Activated CD4-positive, alpha-beta T cell treated with anti-CD3 and anti-CD28 coated beads, Interleukin-2, amount 10 ng/mL, durations not matched to agents 24 days and 14 days (primary cell): ENCODE measurements at regions of chr17 and their contacts with region 1.

Region 1: GRCh38 chr17:32349854-32350665 is at the start of gene ZNF207:
- DNase-seq: peak; percentile 99
- H3K4me3 Mint-ChIP-seq: peak within 1 kb of the TSS; percentile 97
- H3K27ac Mint-ChIP-seq: peak within 1 kb of the TSS; percentile 99
- H3K4me1 Mint-ChIP-seq: peaks cover 20% of the 10 kb centered on the region
- H3K27me3 Mint-ChIP-seq: no peaks in the 10 kb centered on the region
- total RNA-seq, gene ZNF207: 269 and 272 TPM in 2 replicates

Region 2: DNA sequence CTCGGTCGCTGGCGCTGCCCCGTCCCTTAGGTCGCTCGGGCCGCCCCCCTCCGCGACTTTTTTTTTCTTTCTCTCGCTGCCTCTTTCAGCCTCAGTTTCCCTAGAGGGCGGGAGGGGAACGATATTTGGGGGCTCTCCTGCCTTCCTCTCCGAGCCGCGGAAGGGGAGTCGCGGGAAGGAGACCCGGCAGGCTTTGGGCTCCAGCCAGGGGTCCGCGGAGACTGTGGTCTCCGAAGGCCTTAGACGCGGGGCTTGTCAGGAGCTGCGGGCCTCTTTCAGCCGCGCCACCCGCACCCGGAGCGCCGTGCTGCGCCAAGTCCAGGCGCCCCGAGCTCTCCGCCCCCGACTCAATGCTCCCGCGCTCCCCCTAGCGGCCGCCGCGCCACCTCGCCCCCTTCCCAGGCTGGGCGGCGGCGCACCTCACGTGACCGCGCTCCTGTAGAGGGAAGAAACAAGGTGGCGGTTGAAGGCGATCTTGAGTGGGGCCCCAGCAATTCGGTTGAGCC is 343.1 kb before region 1 on chr17 and contains the start of gene LRRC37B:
- intact Hi-C with region 1: loop called (anchors 10 kb)
- DNase-seq: peak; percentile 98
- H3K4me3 Mint-ChIP-seq: peak within 1 kb of the TSS; percentile 91
- H3K27ac Mint-ChIP-seq: peak within 1 kb of the TSS; percentile 90
- H3K4me1 Mint-ChIP-seq: peaks cover 30% of the 10 kb centered on the region
- H3K27me3 Mint-ChIP-seq: no peaks in the 10 kb centered on the region
- total RNA-seq, gene LRRC37B: 17.7 and 22.1 TPM in 2 replicates

Region 3: DNA sequence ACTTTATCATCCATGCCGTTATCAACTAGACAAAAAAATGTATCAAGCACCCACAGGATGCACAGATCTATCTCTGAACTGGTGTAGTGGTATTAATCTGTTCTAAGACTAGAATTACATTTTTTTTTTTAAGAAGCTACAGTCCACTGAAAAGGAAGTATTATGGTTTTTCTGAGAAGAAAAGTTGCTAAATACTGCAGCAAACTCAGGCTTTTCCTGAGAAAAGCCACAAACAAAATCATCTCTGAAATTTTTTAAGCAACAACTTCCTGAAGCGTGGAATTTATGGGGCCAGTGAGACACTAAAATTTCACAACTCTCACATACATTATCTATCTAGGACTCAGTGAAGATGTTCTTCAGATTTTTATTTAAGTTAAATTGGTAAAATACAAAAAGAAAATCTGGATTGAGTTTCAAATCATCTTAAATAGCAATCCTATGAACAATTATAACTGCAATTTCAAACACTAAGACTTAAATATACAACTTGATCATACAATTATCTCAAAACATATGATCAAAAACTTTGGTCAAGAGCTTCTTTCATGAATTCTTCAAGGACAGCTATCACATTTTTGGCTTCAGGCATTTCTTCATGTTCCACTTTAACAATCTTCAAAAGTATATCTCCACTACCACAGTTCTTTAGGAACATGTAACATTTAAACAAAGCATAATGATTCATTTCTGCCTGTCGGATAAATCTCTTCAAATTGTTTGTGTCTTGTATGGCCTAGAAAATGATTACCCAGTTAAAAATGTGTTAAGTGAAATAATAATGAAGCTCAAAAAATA is 18.6 kb before region 1 on chr17:
- intact Hi-C with region 1: loop called (anchors 2 kb)
- DNase-seq: peak; percentile 63
- H3K4me3 Mint-ChIP-seq: peak overlapping the region; percentile 47
- H3K27ac Mint-ChIP-seq: peak overlapping the region; percentile 71
- H3K4me1 Mint-ChIP-seq: peaks cover 40% of the 10 kb centered on the region
- H3K27me3 Mint-ChIP-seq: no peaks in the 10 kb centered on the region

Region 4: GRCh38 chr17:32495359-32496231 is 145.5 kb after region 1 on chr17:
- intact Hi-C with region 1: no loop called
- DNase-seq: peak; percentile 54
- H3K4me3 Mint-ChIP-seq: no peak overlapping the region
- H3K27ac Mint-ChIP-seq: no peak overlapping the region
- H3K4me1 Mint-ChIP-seq: peaks cover 23% of the 10 kb centered on the region
- H3K27me3 Mint-ChIP-seq: no peaks in the 10 kb centered on the region